ENCODE measurements at regions of chr3 and their contacts with region 1.

Region 1: GRCh38 chr3:128650096-128651050 is at the start of gene RPN1:
- DNase-seq: peak; percentile 87 to 98
- H3K4me3 ChIP-seq: peak within 1 kb of the TSS; percentile 99 to 100
- H3K27ac ChIP-seq: peak within 1 kb of the TSS; percentile 96 to 99
- H3K4me1 ChIP-seq: peaks cover 0 to 10% of the 10 kb centered on the region in 2 donors
- H3K27me3 ChIP-seq: no peaks in the 10 kb centered on the region
- CTCF ChIP-seq: no peak
- total RNA-seq, gene RPN1: 226 TPM

Region 2: GRCh38 chr3:128879125-128879969 is 229.0 kb after region 1 on chr3 and contains the start of gene ACAD9:
- intact Hi-C with region 1: loop called (anchors 1 kb)
- DNase-seq: peak; percentile 94 to 98
- H3K4me3 ChIP-seq: peak within 1 kb of the TSS; percentile 71 to 86
- H3K27ac ChIP-seq: peak within 1 kb of the TSS; percentile 91 to 95
- H3K4me1 ChIP-seq: peaks cover 17% of the 10 kb centered on the region in 2 donors
- H3K27me3 ChIP-seq: no peaks in the 10 kb centered on the region
- CTCF ChIP-seq: no peak
- total RNA-seq, gene ACAD9: 23.4 TPM